ENCODE measurements at regions of chr6 and their contacts with region 1.

Region 1: DNA sequence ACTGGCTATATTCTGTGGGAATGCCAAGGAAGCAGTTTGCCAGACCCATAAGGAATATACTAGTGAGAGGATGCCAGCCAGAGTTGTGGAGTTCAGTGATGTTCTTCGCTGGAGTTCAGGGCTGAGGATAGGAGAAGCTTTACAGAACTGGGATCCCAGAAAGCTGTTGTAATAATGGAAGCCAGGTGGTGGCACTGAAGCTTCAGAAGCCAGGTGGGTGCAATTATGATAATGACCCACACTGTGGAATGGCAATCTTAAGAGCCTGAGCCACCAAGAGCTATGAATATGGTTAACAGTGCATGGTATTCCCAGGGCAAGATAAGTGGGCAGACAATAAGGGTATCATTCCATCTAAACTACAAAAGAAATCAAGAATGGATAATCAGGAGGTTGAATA is 25.1 kb upstream of the ENPP1 start:
- DNase-seq: no peak
- ATAC-seq: no peak
- H3K4me3 ChIP-seq: no peak overlapping the region
- H3K27ac ChIP-seq: no peak overlapping the region
- H3K4me1 ChIP-seq: no peaks in the 10 kb centered on the region
- H3K27me3 ChIP-seq: no peaks in the 10 kb centered on the region
- CTCF ChIP-seq: peak in 1 of 5 experiments; percentile 16
- POLR2A ChIP-seq: no peak

Region 2: DNA sequence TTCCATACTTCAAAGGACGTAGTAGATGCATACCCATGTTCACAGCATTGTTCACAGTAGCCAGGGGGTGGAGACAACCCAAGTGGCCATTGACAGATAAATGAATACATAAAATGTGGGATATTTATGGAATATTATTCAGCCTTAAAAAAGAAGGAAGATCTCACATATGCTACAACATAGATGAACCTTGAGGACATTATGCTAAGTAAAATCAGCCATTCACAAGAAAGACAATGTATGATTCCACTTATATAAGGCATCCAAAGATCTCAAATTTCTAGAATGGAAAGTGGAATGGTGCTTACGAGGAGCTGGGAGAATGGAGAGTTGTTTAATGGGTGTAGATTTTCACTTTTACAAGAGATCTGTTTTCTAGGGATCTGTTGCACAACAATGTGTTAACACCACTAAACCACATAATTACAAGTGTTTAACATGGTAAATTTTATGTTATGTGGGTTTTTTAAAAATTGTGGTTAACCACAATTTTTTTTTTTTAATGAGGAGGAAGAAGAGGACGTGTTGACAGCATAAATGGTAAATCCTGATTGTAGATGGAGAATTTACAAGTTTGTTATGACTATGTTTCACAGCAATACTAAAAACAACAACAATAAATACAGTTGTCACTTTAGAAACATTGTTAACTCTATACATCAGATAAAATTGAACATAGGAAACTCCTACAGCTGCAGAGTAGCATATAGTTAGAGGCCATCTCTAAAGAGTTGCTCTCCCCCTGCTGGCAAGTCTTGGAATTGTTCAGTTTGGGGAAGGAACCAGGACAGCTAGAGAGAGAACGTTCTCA is 126.8 kb after region 1 on chr6:
- in situ Hi-C with region 1: no loop called
- intact Hi-C with region 1: loop called (anchors 2 kb)
- DNase-seq: peak; percentile 19 to 42
- ATAC-seq: peak; percentile 69 to 76
- H3K4me3 ChIP-seq: no peak overlapping the region
- H3K27ac ChIP-seq: no peak overlapping the region
- H3K4me1 ChIP-seq: no peaks in the 10 kb centered on the region
- H3K27me3 ChIP-seq: no peaks in the 10 kb centered on the region
- CTCF ChIP-seq: peak; percentile 55 to 81 (median 63)
- POLR2A ChIP-seq: no peak